ENCODE measurements at regions of chr2 and their contacts with region 1.

Region 1: DNA sequence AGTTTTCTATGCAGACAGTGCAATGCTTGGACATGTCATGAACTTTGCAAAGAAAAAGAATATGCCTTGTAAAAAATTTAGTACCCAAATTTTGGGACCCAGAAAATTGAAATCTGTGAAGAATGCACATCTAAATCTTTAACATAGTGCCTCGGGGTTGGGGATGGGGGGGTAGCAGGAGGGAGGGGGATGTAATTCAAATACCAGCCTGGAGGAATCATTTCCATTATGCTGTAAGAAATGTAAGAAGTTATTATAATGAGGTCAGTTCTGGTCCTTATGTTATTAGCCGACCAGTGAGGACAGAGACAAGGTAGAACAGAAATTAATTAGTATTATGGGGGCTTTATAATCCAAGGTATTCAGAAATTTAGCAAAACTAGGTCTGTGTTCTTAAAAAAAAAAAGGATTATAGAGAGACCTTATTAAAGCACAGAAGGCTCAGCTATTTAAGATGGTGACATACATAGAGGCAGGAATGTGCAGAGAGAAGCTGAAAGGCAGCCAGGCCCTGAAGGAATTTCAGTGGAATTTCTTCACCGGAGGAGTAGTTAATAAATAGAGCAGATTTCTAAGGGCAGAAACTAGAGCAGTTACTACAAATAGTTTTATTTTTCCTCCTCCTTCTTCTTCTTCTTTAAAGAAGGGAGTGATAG is 89.0 kb upstream of the RBMS1 start:
- DNase-seq: peak in 1 of 2 experiments; percentile 18
- H3K4me3 ChIP-seq: no peak overlapping the region
- H3K4me3 Mint-ChIP-seq: no peak overlapping the region
- H3K27ac Mint-ChIP-seq: peak overlapping the region; percentile 83
- H3K4me1 ChIP-seq: peaks cover 14% of the 10 kb centered on the region
- H3K4me1 Mint-ChIP-seq: peaks cover 7% of the 10 kb centered on the region
- H3K27me3 ChIP-seq: no peaks in the 10 kb centered on the region
- H3K27me3 Mint-ChIP-seq: no peaks in the 10 kb centered on the region
- CTCF ChIP-seq: no peak

Region 2: DNA sequence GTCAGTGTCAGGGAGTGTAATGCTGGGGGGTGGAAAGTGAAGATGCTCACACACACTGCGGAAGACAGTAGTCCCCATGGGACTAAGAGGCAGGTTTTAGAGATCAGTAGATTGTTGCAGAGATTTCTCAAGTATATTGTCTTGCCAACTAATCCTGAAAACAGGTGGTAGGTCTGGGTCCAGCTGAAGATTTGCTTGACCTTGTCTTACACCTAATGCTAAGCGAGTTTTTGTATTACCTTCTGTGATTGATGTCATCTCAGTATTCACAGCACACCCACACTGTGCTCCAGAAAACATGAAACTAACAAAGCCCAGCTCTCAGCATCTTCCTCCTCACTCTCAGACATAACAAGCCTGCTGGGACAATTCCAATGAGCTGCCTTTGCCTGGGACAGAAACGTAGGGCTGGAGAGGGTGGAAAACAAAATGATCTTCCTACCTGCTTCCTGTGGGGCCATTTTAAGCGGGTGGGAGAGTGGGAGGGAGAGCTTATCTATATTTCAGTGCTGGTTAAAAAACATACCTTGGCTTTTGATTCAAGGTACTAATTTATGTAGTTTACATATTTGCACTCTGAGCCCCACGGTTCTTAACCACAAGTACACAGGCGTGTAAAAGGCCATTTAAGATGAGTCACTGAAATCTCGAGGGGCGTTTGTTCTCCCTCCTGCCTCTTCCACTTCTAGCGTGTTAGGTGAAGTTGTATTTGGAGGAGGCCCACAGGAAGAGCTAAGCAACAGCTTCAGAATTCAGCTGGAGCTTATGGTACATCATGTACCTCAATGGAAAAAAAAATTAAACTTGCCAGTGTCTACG is 65.9 kb before region 1 on chr2:
- CTCF ChIA-PET with region 1: no interaction called
- POLR2A ChIA-PET with region 1: no interaction called
- intact Hi-C with region 1: loop called (anchors 5 kb)
- DNase-seq: no peak
- H3K4me3 ChIP-seq: no peak overlapping the region
- H3K4me3 Mint-ChIP-seq: no peak overlapping the region
- H3K27ac Mint-ChIP-seq: no peak overlapping the region
- H3K4me1 ChIP-seq: no peaks in the 10 kb centered on the region
- H3K4me1 Mint-ChIP-seq: no peaks in the 10 kb centered on the region
- H3K27me3 ChIP-seq: no peaks in the 10 kb centered on the region
- H3K27me3 Mint-ChIP-seq: no peaks in the 10 kb centered on the region
- CTCF ChIP-seq: no peak

Region 3: GRCh38 chr2:160752496-160753330 is 170.1 kb after region 1 on chr2:
- CTCF ChIA-PET with region 1: no interaction called
- POLR2A ChIA-PET with region 1: no interaction called
- intact Hi-C with region 1: no loop called
- DNase-seq: peak; percentile 35 to 50
- H3K4me3 ChIP-seq: no peak overlapping the region
- H3K4me3 Mint-ChIP-seq: peak overlapping the region; percentile 21
- H3K27ac Mint-ChIP-seq: no peak overlapping the region
- H3K4me1 ChIP-seq: peaks cover 30% of the 10 kb centered on the region
- H3K4me1 Mint-ChIP-seq: peaks cover 21% of the 10 kb centered on the region
- H3K27me3 ChIP-seq: no peaks in the 10 kb centered on the region
- H3K27me3 Mint-ChIP-seq: no peaks in the 10 kb centered on the region
- CTCF ChIP-seq: no peak

Measured in Caco-2 (cell line).